ENCODE measurements at regions of chr12 and their contacts with region 1.

Region 1: DNA sequence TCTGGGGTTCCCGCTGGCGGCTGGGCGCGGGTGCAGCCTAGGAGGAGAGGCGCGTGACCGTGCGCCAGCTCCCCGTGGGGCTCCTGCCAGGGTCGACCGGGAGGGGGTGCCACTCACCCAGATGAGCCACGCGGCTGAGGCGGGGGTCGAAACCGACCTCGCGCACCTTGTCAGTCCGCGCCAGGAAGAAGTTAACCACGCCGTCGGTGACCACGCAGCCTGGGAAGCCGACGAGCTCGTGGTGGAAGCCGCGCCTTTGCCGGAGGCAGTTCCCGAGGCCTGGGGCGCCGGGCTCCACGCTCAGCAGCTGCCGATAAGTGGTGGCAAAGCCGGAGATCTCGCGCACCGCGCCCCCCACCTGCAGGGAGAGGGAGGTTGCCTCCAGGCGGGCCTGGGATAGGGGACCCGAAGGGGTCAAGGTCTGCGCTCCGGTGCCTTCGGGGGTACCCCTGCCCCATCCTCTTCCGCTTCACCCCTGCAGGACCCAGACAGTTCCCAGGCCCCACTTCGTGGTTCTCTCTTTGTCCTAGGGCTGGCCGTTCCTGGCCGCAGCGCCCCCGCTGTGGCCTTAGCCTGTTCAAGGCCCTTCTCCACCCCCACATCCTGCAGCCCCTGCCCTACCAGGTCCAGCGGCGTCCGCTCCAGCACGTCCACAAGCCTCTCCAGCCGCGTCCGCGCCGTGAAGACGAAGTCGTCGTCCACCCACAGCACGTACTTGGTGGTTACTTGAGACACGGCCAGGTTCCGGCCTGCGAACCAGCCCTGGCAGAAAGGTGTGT is 5.3 kb downstream of the B4GALNT1 start:
- DNase-seq: no peak
- H3K4me3 ChIP-seq: peak overlapping the region in 1 of 4 donors; percentile 6
- H3K27ac ChIP-seq: no peak overlapping the region
- H3K4me1 ChIP-seq: peaks cover 6 to 18% (median 9%) of the 10 kb centered on the region in 4 donors
- H3K27me3 ChIP-seq: peaks cover 98% of the 10 kb centered on the region
- CTCF ChIP-seq: no peak
- EP300 ChIP-seq: no peak
- POLR2A ChIP-seq: no peak

Region 2: GRCh38 chr12:57469296-57470164 is 158.2 kb before region 1 on chr12:
- in situ Hi-C with region 1: loop called in 1 of 4 experiments (anchors 5 kb)
- intact Hi-C with region 1: no loop called
- DNase-seq: no peak
- H3K4me3 ChIP-seq: no peak overlapping the region
- H3K27ac ChIP-seq: no peak overlapping the region
- H3K4me1 ChIP-seq: peaks cover 0 to 14% (median 4%) of the 10 kb centered on the region in 4 donors
- H3K27me3 ChIP-seq: peaks cover 44% of the 10 kb centered on the region
- CTCF ChIP-seq: no peak
- EP300 ChIP-seq: no peak
- POLR2A ChIP-seq: no peak

Region 3: DNA sequence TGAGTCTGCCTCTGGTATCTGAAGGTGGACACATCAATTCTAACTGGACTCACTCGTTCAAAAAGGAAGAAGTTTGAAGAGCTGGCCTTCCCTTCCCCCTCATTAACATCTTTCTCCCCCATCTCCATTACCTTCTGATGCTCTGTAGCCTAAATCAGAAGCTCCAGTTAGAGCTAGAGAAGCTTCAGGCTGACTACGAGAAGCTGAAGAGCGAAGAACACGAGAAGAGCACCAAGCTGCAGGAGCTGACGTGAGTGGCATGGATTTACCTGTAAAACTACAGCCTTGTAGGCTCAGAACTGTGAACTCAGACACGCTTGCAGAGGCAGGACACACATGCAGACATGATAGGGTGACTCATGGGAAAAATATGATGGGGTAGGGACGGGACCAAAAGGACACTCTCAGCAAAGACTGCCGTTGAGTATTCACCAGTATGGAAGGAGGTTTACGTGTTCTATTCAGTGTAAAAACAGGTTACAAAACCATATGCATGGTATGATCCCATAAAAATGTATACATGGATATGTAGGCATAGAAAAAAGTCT is 51.0 kb before region 1 on chr12:
- in situ Hi-C with region 1: loop called in 3 of 4 experiments (anchors 5 to 10 kb)
- intact Hi-C with region 1: loop called (anchors 2 kb)
- DNase-seq: no peak
- H3K4me3 ChIP-seq: no peak overlapping the region
- H3K27ac ChIP-seq: no peak overlapping the region
- H3K4me1 ChIP-seq: no peaks in the 10 kb centered on the region
- H3K27me3 ChIP-seq: no peaks in the 10 kb centered on the region
- CTCF ChIP-seq: no peak
- EP300 ChIP-seq: no peak
- POLR2A ChIP-seq: no peak

Region 4: DNA sequence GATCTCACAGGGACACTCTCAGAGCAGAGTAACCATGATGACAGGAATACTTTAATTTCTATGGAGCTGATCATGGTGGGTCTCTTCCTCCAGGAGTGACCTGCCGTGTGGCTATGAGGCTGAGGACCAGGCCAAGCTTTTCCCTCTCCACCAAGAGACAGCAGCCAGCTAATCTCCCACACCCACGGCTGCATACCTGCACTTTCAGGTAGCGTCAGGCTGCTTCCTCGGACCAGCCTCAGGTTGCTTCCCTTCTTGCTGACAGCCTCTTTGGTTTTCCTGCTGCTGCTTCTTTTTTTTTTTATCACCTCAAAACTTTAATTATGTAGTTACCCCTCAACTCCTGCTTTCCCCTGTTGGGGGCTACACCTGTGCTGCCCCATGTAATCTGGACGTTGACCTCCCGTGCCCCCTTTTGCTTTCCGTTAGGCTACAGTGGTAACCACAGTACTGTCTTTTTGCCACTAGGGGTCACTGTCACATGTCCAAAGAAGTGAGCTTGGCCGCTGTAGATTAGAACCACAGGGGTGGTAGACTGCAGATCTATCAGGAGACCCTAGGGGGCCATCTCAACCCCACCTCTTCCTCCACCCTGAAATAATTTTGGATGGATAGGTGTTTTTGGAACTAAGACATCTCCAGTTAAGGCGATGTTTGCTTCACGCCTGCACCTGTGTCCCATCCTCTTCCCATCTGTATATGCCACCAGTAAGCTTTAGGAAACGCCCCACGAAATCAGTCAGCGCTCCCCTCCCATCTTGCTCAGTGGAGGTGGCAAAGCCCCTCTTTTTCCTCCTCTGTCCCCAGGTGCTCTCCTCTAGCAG is 44.5 kb before region 1 on chr12:
- in situ Hi-C with region 1: loop called in 3 of 4 experiments (anchors 5 to 10 kb)
- intact Hi-C with region 1: loop called (anchors 2 kb)
- DNase-seq: peak; percentile 63
- H3K4me3 ChIP-seq: no peak overlapping the region
- H3K27ac ChIP-seq: no peak overlapping the region
- H3K4me1 ChIP-seq: no peaks in the 10 kb centered on the region
- H3K27me3 ChIP-seq: peaks cover 29% of the 10 kb centered on the region
- CTCF ChIP-seq: peak; percentile 91 to 96 (median 93)
- EP300 ChIP-seq: no peak
- POLR2A ChIP-seq: no peak

Measured in transverse colon (tissue), 4 donors.